ENCODE measurements at regions of chr1 and their contacts with region 1.

Region 1: DNA sequence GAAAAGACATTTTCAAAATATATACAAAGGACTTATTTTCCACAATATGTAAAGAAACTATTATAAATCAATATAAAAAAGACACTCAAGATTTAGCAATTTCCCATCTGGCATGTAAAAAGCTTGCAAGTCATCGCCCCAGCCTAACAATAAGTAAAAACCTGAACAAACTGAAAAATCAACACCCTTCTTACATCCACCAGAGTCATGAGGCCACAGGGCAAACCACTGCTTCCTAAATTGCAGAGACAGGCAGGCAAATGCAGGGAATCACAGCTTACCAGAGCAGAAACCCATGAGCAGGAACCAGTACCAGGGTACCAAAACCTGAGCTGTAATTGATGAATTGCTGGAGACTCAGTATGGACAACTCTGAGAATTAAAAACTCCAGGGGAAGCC is 16.7 kb upstream of the WNT2B start:
- DNase-seq: no peak
- ATAC-seq: no peak
- H3K4me3 ChIP-seq: no peak overlapping the region
- H3K27ac ChIP-seq: no peak overlapping the region
- H3K4me1 ChIP-seq: no peaks in the 10 kb centered on the region
- H3K27me3 ChIP-seq: no peaks in the 10 kb centered on the region
- CTCF ChIP-seq: no peak

Region 2: DNA sequence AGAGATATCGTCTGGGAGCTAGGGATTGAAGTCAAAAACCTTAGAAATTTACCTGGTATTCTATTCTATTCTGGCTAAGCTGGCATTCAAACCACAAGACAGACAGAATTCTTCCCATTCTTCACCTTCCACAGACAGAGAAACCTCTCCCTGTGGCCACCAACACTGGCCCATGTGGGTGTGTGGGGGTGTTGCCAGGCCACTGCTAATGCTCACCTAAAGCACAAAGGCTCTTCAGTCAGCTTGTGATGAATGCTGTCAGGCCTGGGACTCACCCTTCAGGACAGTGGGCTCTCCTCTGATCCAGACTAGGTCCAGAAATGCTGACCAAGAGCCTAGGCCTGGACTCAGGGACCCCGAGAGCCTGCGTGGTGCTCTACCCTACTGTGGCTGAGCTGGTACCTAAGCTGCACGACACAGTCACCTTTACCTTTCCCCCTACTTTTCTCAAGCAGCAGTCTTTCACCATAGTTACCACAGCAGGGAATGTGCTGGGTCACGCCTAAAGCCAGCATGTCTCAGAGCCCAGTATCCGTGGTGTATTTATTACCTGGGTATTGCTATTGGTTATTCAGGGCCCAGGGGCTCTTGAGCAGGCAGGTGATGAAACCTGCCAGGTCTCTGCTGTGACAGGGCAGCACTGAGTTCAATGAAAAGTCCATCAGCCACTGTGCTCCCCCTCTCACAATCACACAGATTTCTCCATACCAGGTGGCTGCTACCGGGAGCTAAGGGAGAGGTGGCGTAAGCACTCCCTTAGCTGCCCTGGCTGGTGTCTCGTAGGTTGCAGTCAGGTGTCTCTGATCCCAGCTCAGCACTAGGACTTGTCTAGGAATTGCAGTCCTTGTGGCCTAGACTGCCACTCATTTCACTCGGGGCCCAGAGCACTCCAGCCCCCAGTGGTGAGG is 1138.2 kb after region 1 on chr1:
- CTCF ChIA-PET with region 1: interaction called, 17 read pairs
- POLR2A ChIA-PET with region 1: no interaction called
- in situ Hi-C with region 1: no loop called
- intact Hi-C with region 1: no loop called
- DNase-seq: no peak
- ATAC-seq: no peak
- H3K4me3 ChIP-seq: no peak overlapping the region
- H3K27ac ChIP-seq: no peak overlapping the region
- H3K4me1 ChIP-seq: no peaks in the 10 kb centered on the region
- H3K27me3 ChIP-seq: no peaks in the 10 kb centered on the region
- CTCF ChIP-seq: no peak